Endothelial cell of umbilical vein (primary cell): ENCODE measurements at regions of chr18 and their contacts with region 1.

Region 1: GRCh38 chr18:34787931-34788532 is 77.9 kb downstream of the DTNA start:
- DNase-seq: peak; percentile 80
- H3K4me3 ChIP-seq: no peak overlapping the region
- H3K27ac ChIP-seq: no peak overlapping the region
- H3K4me1 ChIP-seq: no peaks in the 10 kb centered on the region
- H3K27me3 ChIP-seq: no peaks in the 10 kb centered on the region
- CTCF ChIP-seq: peak; percentile 37 to 48
- POLR2A ChIP-seq: no peak

Region 2: DNA sequence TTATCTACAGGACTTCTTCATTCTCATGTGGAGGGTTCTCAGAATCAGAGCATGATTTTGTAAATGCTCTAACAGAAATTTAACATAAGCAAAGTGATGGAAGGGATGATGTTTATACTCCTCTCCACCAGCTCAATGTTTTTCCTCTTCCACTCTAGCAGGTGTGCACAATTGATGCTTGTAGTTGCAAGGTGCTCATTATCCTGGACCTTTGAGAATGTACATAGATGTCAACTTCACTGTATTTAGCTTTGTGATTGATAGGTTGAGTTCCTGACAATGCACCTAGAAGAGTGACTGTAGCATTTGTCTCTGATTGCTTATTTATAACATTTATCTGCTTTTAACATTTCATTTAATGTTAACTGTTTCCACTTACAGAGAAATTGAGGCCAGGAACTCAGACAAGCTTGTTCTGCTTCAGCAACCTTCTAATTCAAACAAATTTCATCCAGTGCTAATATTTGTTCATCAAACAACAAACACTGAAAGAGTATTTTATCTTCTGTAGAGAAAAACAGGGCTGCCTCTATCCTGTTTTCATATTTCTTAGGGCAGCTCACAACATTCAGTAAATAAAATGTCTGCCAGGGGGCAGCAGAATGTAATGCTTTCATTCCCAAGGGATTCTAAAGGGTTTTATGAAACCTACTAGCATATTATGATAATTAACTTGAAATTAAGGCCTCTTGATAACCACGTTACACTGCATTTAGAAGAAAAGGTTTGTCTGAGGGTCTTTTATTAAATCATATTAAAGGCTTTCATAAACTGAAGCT is 435.5 kb before region 1 on chr18:
- CTCF ChIA-PET with region 1: interaction called, 35 read pairs
- POLR2A ChIA-PET with region 1: no interaction called
- dilution Hi-C with region 1: no loop called
- intact Hi-C with region 1: loop called (anchors 2 kb)
- DNase-seq: peak; percentile 35
- H3K4me3 ChIP-seq: no peak overlapping the region
- H3K27ac ChIP-seq: no peak overlapping the region
- H3K4me1 ChIP-seq: no peaks in the 10 kb centered on the region
- H3K27me3 ChIP-seq: no peaks in the 10 kb centered on the region
- CTCF ChIP-seq: no peak
- POLR2A ChIP-seq: no peak

Region 3: DNA sequence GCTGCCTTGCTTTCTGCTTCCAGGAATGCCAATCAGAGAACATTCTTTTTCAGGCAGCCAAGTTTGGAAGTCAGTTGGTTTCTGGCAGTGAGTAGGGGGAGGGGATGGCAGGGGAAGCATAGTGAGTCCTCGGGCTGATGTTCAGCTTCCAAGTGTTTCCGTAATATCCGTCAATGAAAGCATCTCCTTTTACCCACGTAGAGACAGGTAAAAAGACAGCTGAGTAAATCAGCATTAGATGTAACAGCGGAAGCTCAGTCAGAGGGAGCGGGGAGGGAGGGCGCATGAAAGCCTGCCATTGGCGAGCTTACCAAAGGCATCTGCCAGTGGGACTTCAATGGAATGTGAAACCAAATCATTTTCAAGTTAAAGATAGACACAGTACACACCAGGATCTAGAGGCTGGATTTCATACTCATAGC is 195.1 kb before region 1 on chr18:
- CTCF ChIA-PET with region 1: interaction called, 23 read pairs
- POLR2A ChIA-PET with region 1: no interaction called
- dilution Hi-C with region 1: no loop called
- intact Hi-C with region 1: loop called (anchors 1 kb)
- DNase-seq: peak; percentile 69
- H3K4me3 ChIP-seq: peak overlapping the region in 2 of 3 experiments; percentile 36 to 43
- H3K27ac ChIP-seq: no peak overlapping the region
- H3K4me1 ChIP-seq: peaks cover 2% of the 10 kb centered on the region
- H3K27me3 ChIP-seq: no peaks in the 10 kb centered on the region
- CTCF ChIP-seq: no peak
- POLR2A ChIP-seq: no peak

Region 4: GRCh38 chr18:34647251-34647650 is 140.8 kb before region 1 on chr18:
- CTCF ChIA-PET with region 1: interaction called, 17 read pairs
- POLR2A ChIA-PET with region 1: no interaction called
- dilution Hi-C with region 1: no loop called
- intact Hi-C with region 1: no loop called
- DNase-seq: no peak
- H3K4me3 ChIP-seq: no peak overlapping the region
- H3K27ac ChIP-seq: no peak overlapping the region
- H3K4me1 ChIP-seq: no peaks in the 10 kb centered on the region
- H3K27me3 ChIP-seq: no peaks in the 10 kb centered on the region
- CTCF ChIP-seq: no peak
- POLR2A ChIP-seq: no peak

Region 5: GRCh38 chr18:34773961-34774766 is 13.9 kb before region 1 on chr18:
- CTCF ChIA-PET with region 1: interaction called, 10 read pairs
- POLR2A ChIA-PET with region 1: no interaction called
- dilution Hi-C with region 1: no loop called
- intact Hi-C with region 1: no loop called
- DNase-seq: peak; percentile 83
- H3K4me3 ChIP-seq: no peak overlapping the region
- H3K27ac ChIP-seq: peak overlapping the region; percentile 57
- H3K4me1 ChIP-seq: peaks cover 22% of the 10 kb centered on the region
- H3K27me3 ChIP-seq: no peaks in the 10 kb centered on the region
- CTCF ChIP-seq: no peak
- POLR2A ChIP-seq: no peak

Region 6: GRCh38 chr18:34809451-34810072 is 21.5 kb after region 1 on chr18:
- CTCF ChIA-PET with region 1: interaction called, 12 read pairs
- POLR2A ChIA-PET with region 1: no interaction called
- dilution Hi-C with region 1: no loop called
- intact Hi-C with region 1: no loop called
- DNase-seq: peak; percentile 31
- H3K4me3 ChIP-seq: no peak overlapping the region
- H3K27ac ChIP-seq: no peak overlapping the region
- H3K4me1 ChIP-seq: no peaks in the 10 kb centered on the region
- H3K27me3 ChIP-seq: no peaks in the 10 kb centered on the region
- CTCF ChIP-seq: peak; percentile 36 to 45
- POLR2A ChIP-seq: no peak

Region 7: GRCh38 chr18:35122586-35123224 is 334.7 kb after region 1 on chr18:
- CTCF ChIA-PET with region 1: no interaction called
- POLR2A ChIA-PET with region 1: no interaction called
- dilution Hi-C with region 1: no loop called
- intact Hi-C with region 1: no loop called
- DNase-seq: no peak
- H3K4me3 ChIP-seq: no peak overlapping the region
- H3K27ac ChIP-seq: no peak overlapping the region
- H3K4me1 ChIP-seq: no peaks in the 10 kb centered on the region
- H3K27me3 ChIP-seq: no peaks in the 10 kb centered on the region
- CTCF ChIP-seq: no peak
- POLR2A ChIP-seq: no peak